ENCODE measurements at regions of chr4 and their contacts with region 1.

Region 1: GRCh38 chr4:37802068-37802666 is 24.3 kb upstream of the PGM2 start:
- DNase-seq: no peak
- ATAC-seq: no peak
- H3K4me3 Mint-ChIP-seq: no peak overlapping the region
- H3K27ac Mint-ChIP-seq: no peak overlapping the region
- H3K4me1 Mint-ChIP-seq: no peaks in the 10 kb centered on the region
- H3K27me3 Mint-ChIP-seq: peaks cover 21% of the 10 kb centered on the region

Region 2: DNA sequence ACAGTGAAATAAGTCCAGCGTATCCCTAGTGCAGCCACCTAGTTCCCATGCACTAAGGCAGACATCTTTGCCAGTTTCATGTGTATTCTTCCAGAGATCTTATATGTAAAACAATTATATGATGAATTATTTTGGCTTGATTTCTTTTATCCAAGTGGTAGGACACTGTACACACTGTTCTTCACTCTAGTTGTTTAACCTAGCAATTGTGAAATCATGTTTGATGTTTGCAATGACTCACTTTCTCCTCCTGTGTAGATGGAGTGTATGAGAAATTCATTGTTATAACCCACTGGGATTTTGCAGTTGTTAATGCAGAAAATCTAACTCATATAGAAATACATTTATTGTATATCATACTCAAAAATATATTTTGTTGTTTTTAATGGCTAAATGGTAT is 71.2 kb after region 1 on chr4:
- CTCF ChIA-PET with region 1: no interaction called
- DNase-seq: no peak
- ATAC-seq: no peak
- H3K4me3 Mint-ChIP-seq: no peak overlapping the region
- H3K27ac Mint-ChIP-seq: no peak overlapping the region
- H3K4me1 Mint-ChIP-seq: peaks cover 13% of the 10 kb centered on the region
- H3K27me3 Mint-ChIP-seq: no peaks in the 10 kb centered on the region

Region 3: GRCh38 chr4:37977471-37978247 is 175.5 kb after region 1 on chr4:
- CTCF ChIA-PET with region 1: interaction called, 14 read pairs
- DNase-seq: peak; percentile 84
- ATAC-seq: peak; percentile 83
- H3K4me3 Mint-ChIP-seq: peak overlapping the region; percentile 77
- H3K27ac Mint-ChIP-seq: peak overlapping the region; percentile 66
- H3K4me1 Mint-ChIP-seq: peaks cover 28% of the 10 kb centered on the region
- H3K27me3 Mint-ChIP-seq: no peaks in the 10 kb centered on the region

Region 4: GRCh38 chr4:38034986-38035882 is 233.1 kb after region 1 on chr4:
- CTCF ChIA-PET with region 1: interaction called, 21 read pairs
- DNase-seq: no peak
- ATAC-seq: no peak
- H3K4me3 Mint-ChIP-seq: no peak overlapping the region
- H3K27ac Mint-ChIP-seq: no peak overlapping the region
- H3K4me1 Mint-ChIP-seq: peaks cover 3% of the 10 kb centered on the region
- H3K27me3 Mint-ChIP-seq: no peaks in the 10 kb centered on the region

Measured in activated CD8-positive, alpha-beta memory T cell treated with anti-CD3 and anti-CD28 coated beads, Interleukin-2, amount 10 ng/mL, durations not matched to agents 7 days and 5 days (primary cell).